ENCODE measurements at regions of chr1 and their contacts with region 1.

Region 1: DNA sequence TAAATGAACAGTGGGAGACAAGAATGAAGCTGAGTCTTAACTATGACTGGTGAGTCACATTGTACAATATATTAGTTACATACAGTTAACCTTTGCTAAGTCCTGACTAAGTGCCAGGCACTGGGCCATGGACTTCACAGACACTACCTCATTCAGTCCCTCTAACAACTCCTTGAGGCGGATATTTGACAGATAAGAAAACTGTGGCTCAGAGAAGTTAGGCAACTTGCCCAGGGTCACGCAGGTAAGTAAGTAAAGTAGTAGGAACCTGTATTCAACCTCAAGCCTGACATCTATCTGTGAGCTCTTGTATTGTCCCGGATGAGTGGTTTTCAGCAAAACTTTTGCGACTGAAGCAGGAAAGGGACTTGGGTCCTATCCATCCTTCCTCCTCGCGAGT is 62.1 kb downstream of the GNG12 start:
- DNase-seq: no peak
- ATAC-seq: peak; percentile 54

Region 2: DNA sequence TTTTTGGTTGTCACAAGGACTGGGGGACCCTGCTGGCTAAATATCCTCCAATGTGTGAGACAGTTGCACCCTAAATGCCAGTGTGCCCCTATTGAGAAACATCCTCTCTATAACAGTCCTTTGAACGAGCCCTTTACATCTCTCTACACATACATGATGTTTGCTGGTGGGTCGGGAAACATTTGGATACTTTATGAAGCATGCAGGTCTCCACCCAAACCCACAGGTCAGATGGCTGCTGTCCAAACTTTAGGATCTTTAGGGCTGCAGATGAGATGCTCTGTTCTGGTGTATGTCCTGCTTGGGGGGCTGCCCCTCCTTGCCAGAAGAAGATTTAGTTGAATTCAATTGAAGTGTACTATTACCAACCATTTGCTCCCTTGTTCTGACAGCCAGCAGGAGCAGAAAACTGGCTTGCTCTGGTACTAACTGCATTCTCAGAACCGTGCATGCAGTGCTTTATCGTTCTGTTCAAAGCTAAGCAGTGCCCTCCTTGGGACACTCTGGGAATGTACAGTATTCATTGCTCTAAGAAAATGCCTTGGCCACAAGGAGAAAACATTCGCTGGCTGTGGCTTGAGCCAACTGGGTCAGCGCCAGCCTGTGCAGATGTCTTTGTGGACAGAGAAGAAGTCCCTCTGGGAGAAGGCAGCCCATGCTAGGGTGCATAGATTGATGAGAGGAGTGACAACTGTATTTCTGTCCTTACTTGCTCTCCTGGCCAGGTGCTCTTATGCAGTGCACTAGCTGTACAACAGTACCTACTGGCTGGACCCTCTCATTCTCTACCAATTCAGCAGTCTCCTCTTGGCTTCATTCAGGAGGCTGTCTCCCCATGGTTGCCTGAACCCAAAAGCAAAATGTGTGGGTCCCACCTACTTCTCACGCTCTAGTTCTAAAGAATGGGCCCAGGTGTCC is 340.6 kb after region 1 on chr1:
- intact Hi-C with region 1: loop called in 1 of 2 experiments (anchors 5 kb)
- DNase-seq: peak; percentile 54 to 65
- ATAC-seq: peak; percentile 97